Activated CD8-positive, alpha-beta T cell treated with anti-CD3 and anti-CD28 coated beads for 36 hours (primary cell): ENCODE measurements at regions of chr1 and their contacts with region 1.

Region 1: DNA sequence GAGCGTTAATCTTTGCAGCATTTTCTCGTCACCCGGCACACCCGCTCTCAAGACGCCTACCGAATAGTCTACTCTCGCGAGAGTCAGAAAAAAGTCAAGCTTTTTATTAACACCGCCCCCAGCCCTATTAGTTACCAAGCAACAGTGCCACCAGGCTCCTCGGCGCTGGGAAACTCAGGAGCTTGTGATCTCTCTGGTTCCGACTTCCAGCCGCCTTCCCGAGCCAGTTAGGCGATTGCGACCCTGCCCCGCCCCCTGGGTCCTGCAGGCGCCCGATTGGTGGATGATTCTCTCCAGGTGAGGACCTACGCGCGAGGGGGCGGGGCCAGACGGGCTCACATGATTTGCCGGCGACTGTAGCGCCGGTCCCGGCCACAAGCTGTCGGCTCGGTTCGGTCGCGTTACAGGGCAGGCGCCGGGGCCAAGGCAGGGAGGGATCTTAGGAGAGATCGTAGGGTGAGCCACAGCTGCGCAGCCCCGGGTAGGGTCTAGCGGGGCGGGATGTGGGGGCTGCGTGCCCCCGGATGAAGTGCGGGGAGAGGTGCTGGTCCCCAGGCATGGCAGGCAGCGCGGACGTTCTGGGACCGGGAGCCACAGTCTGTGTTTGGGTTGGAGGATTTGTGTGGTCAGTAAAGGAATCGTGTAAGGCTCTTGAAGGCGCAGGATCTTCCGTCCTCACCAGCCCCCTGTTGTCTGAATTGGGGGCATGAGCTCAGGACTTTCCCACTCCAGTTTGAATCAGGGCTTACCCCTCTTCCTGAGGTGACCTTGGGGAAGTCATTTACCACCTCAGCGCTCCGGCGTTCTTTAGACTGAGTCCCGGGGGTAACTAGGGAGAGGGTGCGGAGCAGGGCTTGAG is at the start of gene PFKFB2:
- DNase-seq: peak; percentile 97
- ATAC-seq: peak; percentile 87
- H3K4me3 Mint-ChIP-seq: peak within 1 kb of the TSS; percentile 99
- H3K27ac Mint-ChIP-seq: peak within 1 kb of the TSS; percentile 84
- H3K4me1 Mint-ChIP-seq: peaks cover 30% of the 10 kb centered on the region
- H3K27me3 Mint-ChIP-seq: no peaks in the 10 kb centered on the region
- CTCF ChIP-seq: no peak
- total RNA-seq, gene PFKFB2: 3.5 to 4.3 TPM

Region 2: DNA sequence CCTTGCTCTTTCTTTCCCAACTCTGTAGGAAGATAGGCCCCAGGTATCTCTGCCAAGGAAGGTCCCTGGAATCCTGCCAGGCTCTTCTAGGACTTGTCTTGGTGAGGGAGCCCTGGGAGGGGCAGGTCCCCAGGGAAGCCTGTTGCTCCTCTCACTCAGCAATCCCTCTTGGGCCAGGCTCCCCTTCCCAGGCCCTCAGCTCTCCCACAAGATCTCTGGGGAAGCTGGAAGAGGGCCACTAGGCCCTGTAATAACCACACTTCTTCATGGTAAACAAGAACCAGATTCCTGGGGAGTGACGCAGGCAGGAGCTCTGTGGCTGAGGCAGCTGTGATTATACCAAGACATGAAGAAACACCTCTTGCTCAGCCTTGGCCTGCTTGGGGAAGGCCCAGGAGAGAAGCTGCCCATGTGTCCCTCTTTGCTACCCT is 378.4 kb before region 1 on chr1:
- CTCF ChIA-PET with region 1: no interaction called
- POLR2A ChIA-PET with region 1: no interaction called
- intact Hi-C with region 1: no loop called
- DNase-seq: no peak
- ATAC-seq: no peak
- H3K4me3 Mint-ChIP-seq: no peak overlapping the region
- H3K27ac Mint-ChIP-seq: no peak overlapping the region
- H3K4me1 Mint-ChIP-seq: peaks cover 10% of the 10 kb centered on the region
- H3K27me3 Mint-ChIP-seq: no peaks in the 10 kb centered on the region
- CTCF ChIP-seq: no peak

Region 3: DNA sequence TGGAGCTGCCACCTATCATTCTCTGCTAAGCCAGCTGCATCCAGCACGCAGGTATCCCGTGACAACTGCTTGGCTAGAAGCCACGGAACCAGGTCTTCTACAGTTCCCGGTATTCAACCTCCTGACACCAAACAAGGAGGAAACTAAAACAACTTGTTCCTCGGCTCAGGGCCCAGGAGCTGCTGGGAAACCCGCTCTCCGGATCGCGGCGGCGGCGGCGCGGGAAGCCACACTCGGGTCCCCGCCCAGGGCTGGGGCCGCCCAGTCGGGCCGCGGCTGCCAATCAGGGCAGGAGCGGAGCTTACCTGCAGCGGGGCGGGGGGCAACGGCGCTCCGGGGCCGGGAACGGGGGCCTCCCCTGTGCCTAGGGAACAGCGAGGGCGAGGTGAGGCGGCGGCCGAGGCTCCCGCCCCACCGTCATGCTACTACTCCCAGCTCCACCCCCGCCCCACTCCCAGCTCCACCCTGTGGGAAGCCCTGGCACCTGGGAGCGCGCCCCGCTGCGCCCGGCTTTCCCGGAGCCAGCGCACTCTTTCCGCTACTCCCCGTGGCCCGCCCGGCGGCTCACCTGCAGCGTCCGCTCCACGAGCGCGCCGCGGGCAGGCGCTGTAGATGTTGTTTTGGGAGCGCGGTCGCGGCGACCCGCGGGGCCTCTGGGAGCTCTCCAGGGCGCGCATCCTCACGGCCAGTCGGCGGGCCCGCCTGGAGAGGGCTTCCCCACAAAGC is 143.8 kb before region 1 on chr1:
- CTCF ChIA-PET with region 1: no interaction called
- POLR2A ChIA-PET with region 1: no interaction called
- intact Hi-C with region 1: no loop called
- DNase-seq: peak; percentile 41
- ATAC-seq: peak; percentile 24
- H3K4me3 Mint-ChIP-seq: peak overlapping the region; percentile 61
- H3K27ac Mint-ChIP-seq: peak overlapping the region; percentile 65
- H3K4me1 Mint-ChIP-seq: peaks cover 85% of the 10 kb centered on the region
- H3K27me3 Mint-ChIP-seq: no peaks in the 10 kb centered on the region
- CTCF ChIP-seq: no peak

Region 4: DNA sequence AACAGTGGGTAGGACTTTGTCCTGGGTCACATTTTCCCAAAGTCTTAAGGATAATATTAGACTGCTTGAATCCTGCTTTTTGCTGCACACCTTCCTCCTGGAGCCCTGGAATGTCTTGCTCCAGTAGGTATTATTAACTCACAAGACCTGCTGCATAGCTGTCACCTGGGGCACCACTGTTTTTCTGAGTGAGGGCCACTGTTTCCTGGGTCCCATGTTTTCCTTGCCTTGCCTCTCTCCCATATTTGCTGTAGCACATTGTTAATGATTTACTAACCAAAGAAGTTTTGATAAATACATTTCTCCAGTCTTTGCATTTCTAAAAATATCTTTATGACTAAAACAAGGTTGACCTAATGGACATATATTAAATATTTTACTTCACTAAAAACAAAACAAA is 60.4 kb before region 1 on chr1:
- CTCF ChIA-PET with region 1: no interaction called
- POLR2A ChIA-PET with region 1: no interaction called
- intact Hi-C with region 1: no loop called
- DNase-seq: no peak
- ATAC-seq: no peak
- H3K4me3 Mint-ChIP-seq: no peak overlapping the region
- H3K27ac Mint-ChIP-seq: no peak overlapping the region
- H3K4me1 Mint-ChIP-seq: no peaks in the 10 kb centered on the region
- H3K27me3 Mint-ChIP-seq: peaks cover 7% of the 10 kb centered on the region
- CTCF ChIP-seq: no peak

Region 5: GRCh38 chr1:207032528-207033017 is 20.6 kb before region 1 on chr1 and contains the start of gene C1orf116:
- CTCF ChIA-PET with region 1: interaction called, 15 read pairs
- POLR2A ChIA-PET with region 1: interaction called, 3 read pairs
- intact Hi-C with region 1: no loop called
- DNase-seq: no peak
- ATAC-seq: no peak
- H3K4me3 Mint-ChIP-seq: no peak within 1 kb of the TSS
- H3K27ac Mint-ChIP-seq: no peak within 1 kb of the TSS
- H3K4me1 Mint-ChIP-seq: no peaks in the 10 kb centered on the region
- H3K27me3 Mint-ChIP-seq: peaks cover 29% of the 10 kb centered on the region
- CTCF ChIP-seq: no peak
- total RNA-seq, gene C1orf116: 0.07 to 0.13 TPM

Region 6: GRCh38 chr1:207040181-207040533 is 13.0 kb before region 1 on chr1:
- CTCF ChIA-PET with region 1: interaction called, 15 read pairs
- POLR2A ChIA-PET with region 1: interaction called, 6 read pairs
- intact Hi-C with region 1: no loop called
- DNase-seq: no peak
- ATAC-seq: no peak
- H3K4me3 Mint-ChIP-seq: no peak overlapping the region
- H3K27ac Mint-ChIP-seq: no peak overlapping the region
- H3K4me1 Mint-ChIP-seq: peaks cover 15% of the 10 kb centered on the region
- H3K27me3 Mint-ChIP-seq: no peaks in the 10 kb centered on the region
- CTCF ChIP-seq: no peak

Region 7: DNA sequence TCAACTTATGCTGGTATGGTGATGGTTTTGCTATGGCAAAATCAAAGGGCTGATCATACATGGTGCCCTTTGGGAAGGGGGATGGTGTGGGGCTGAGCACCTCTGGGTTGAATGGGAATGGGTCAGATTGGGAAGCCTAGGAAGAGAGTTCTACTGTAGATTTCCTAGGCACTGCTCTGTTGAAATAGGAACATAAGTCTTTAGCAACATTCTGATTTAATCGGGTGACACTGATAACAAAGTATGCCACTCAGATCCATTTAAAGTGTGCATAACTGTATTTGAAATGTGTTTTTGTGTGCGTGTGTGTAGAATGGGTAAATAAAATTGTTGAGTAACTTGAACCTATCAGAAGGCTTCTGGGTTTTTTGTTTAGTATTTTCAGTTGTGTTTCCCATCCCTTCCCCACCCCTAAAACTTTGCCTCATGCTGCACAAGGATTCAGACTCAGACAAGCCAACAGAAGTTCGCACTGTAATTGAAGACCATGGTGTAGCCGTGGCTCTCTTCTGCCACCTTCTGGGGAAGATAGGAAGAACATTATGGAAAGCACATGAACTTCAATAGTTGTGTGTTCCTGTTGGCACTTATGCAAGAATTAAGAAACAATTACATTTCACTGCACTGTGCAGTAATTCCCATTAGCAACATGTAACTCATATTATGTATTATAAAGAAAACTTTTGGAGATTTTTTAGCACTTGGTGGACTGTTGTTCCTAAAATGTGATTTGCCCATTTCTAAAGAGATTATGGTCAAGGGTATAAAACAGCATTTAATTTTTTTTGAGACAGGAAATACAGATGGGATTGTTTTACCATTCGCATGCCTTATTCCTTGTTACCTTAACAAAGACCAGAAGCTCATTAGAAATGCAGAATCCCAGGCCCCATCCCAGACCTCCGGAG is 24.6 kb after region 1 on chr1:
- CTCF ChIA-PET with region 1: interaction called, 49 read pairs
- POLR2A ChIA-PET with region 1: interaction called, 9 read pairs
- intact Hi-C with region 1: loop called (anchors 2 kb)
- DNase-seq: peak; percentile 76
- ATAC-seq: peak; percentile 98
- H3K4me3 Mint-ChIP-seq: no peak overlapping the region
- H3K27ac Mint-ChIP-seq: no peak overlapping the region
- H3K4me1 Mint-ChIP-seq: no peaks in the 10 kb centered on the region
- H3K27me3 Mint-ChIP-seq: no peaks in the 10 kb centered on the region
- CTCF ChIP-seq: peak; percentile 90

Region 8: GRCh38 chr1:207084701-207085180 is 31.6 kb after region 1 on chr1:
- CTCF ChIA-PET with region 1: interaction called, 24 read pairs
- POLR2A ChIA-PET with region 1: interaction called, 3 read pairs
- intact Hi-C with region 1: no loop called
- DNase-seq: peak; percentile 73
- ATAC-seq: peak; percentile 83
- H3K4me3 Mint-ChIP-seq: no peak overlapping the region
- H3K27ac Mint-ChIP-seq: no peak overlapping the region
- H3K4me1 Mint-ChIP-seq: peaks cover 25% of the 10 kb centered on the region
- H3K27me3 Mint-ChIP-seq: peaks cover 2% of the 10 kb centered on the region
- CTCF ChIP-seq: peak; percentile 70

Region 9: GRCh38 chr1:207374887-207375286 is 321.7 kb after region 1 on chr1:
- CTCF ChIA-PET with region 1: no interaction called
- POLR2A ChIA-PET with region 1: no interaction called
- intact Hi-C with region 1: no loop called
- DNase-seq: no peak
- ATAC-seq: no peak
- H3K4me3 Mint-ChIP-seq: no peak overlapping the region
- H3K27ac Mint-ChIP-seq: no peak overlapping the region
- H3K4me1 Mint-ChIP-seq: no peaks in the 10 kb centered on the region
- H3K27me3 Mint-ChIP-seq: no peaks in the 10 kb centered on the region
- CTCF ChIP-seq: no peak